OCI-LY7 (cell line): ENCODE measurements at regions of chr1 and their contacts with region 1.

Region 1: GRCh38 chr1:200979574-200980451 is 43.7 kb downstream of the KIF21B start:
- DNase-seq: peak; percentile 59
- H3K4me3 ChIP-seq: no peak overlapping the region
- H3K27ac ChIP-seq: no peak overlapping the region
- H3K4me1 ChIP-seq: no peaks in the 10 kb centered on the region
- CTCF ChIP-seq: peak; percentile 97

Region 2: DNA sequence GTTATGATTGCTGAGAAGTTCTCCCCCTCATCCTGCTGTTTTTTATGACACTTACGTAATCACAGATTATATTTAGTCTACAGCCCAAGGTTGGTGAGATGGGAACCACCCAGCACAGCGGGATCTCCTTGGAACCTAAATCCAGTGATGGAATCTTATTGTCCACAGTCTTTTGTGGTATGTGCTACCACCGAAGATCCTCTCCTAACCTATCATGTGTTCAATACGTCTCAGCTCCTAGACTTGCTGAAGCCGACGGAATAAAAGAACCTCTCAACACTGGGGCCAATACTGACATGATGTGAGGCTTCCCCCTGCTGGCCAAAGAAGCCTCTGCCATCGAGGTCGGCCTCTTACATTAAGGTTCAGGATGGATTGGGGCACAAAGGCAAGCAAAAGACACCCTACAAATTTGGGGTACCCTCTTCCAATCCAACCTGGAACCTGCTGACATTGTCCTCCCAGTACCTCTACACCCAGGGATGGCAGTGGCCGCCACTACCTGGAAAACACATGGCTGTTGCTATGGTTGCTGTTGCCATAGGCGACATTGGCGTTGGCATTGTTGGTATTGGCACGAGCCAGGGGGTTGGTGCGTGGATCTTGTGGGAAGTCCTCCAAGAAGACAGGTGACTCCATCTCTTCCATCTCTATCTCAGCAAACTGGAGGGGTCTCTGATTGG is 63.1 kb after region 1 on chr1:
- CTCF ChIA-PET with region 1: interaction called, 13 read pairs
- POLR2A ChIA-PET with region 1: interaction called, 3 read pairs
- intact Hi-C with region 1: loop called (anchors 1 kb)
- DNase-seq: peak; percentile 73
- H3K4me3 ChIP-seq: no peak overlapping the region
- H3K27ac ChIP-seq: no peak overlapping the region
- H3K4me1 ChIP-seq: no peaks in the 10 kb centered on the region
- CTCF ChIP-seq: peak; percentile 96

Region 3: GRCh38 chr1:201096035-201096434 is 116.2 kb after region 1 on chr1:
- CTCF ChIA-PET with region 1: no interaction called
- POLR2A ChIA-PET with region 1: no interaction called
- intact Hi-C with region 1: no loop called
- DNase-seq: peak; percentile 48
- H3K4me3 ChIP-seq: no peak overlapping the region
- H3K27ac ChIP-seq: no peak overlapping the region
- H3K4me1 ChIP-seq: peaks cover 9% of the 10 kb centered on the region
- CTCF ChIP-seq: no peak